Activated B cell treated with CpG ODN at 0.5 μM for 24 hours (primary cell): ENCODE measurements at regions of chr14 and their contacts with region 1.

Region 1: DNA sequence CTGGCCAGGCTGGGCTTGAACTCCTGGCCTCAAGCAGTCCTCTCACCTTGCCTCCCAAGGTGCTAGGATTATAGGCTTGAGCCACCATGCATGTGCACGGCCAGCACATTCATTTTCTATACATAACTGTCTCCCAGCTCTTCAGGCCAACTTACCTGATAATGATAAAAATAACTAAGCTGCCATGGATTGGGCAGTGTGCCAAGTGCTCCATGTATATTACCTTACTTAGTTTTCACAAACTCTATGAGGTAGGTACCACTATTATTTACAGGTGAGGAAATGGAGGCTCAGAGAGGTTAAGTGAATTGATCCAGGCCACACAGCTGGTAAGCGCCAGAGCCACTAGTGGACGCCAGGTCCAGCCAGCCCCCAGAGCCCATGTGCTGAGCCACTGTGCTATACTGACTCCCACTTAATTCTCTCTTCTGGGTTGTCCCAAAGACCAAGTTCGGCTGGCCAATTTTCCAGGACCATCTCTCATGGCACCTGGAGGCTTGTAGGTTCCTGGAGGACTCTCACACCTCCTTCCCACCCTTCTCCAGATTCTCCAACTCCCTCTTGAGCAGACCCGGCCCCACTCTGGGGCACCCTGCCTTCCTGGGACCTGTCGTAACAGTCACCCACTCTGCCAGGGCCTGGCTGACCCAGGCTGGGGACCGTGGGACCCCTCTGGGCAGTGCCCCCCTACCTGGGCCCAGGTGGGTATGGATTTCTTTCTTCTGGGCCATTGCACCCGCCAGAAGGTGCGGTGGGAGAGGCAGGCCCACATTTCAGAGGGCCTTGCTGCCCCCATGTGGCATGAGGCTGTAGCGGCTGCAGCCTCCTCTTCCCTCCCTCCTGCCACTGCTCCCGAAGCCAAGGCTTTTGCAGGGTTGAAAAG is 30.2 kb upstream of the CIPC start:
- DNase-seq: peak; percentile 48
- ATAC-seq: peak; percentile 66
- H3K4me3 Mint-ChIP-seq: no peak overlapping the region
- H3K27ac Mint-ChIP-seq: no peak overlapping the region
- H3K4me1 Mint-ChIP-seq: peaks cover 28% of the 10 kb centered on the region
- H3K27me3 Mint-ChIP-seq: peaks cover 3% of the 10 kb centered on the region
- CTCF ChIP-seq: no peak

Region 2: GRCh38 chr14:76876076-76876475 is 191.8 kb before region 1 on chr14:
- CTCF ChIA-PET with region 1: interaction called, 233 read pairs
- POLR2A ChIA-PET with region 1: interaction called, 8 read pairs
- intact Hi-C with region 1: loop called (anchors 1 kb)
- DNase-seq: no peak
- ATAC-seq: peak; percentile 54
- H3K4me3 Mint-ChIP-seq: no peak overlapping the region
- H3K27ac Mint-ChIP-seq: no peak overlapping the region
- H3K4me1 Mint-ChIP-seq: no peaks in the 10 kb centered on the region
- H3K27me3 Mint-ChIP-seq: no peaks in the 10 kb centered on the region
- CTCF ChIP-seq: no peak

Region 3: DNA sequence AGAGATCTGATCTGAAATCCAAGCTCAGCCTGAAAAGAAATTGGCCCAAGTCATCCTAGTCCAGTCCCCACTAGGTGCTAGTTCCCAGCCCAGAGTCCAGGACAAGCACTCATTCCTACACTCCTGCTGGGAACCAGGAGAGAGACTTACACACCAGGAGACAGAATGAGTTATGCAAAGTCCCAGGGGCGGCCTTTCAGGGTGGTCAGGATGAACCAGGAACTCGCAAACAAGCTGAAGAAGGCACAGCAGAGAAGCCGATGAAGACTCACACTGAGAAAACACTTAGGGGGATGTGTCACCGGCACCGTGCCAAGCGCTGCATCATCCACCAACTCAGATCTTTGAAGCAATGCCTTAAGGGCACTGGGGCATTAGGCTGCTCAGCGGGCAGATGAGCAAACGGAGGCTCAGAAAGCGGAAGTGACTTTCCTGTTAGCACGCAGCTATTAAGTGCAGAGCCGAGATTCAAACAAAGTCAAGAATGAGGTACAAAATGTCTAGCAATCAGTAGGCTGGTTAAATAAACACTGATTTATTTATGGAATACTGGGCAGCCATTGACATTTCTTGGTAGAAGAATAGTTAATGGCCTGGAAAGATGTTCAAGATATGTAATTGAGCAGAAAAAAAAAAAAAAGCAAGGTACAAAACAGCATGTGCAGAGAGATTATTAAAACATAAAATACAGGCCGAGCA is 163.0 kb before region 1 on chr14:
- CTCF ChIA-PET with region 1: interaction called, 13 read pairs
- POLR2A ChIA-PET with region 1: interaction called, 9 read pairs
- intact Hi-C with region 1: no loop called
- DNase-seq: peak; percentile 73
- ATAC-seq: peak; percentile 92
- H3K4me3 Mint-ChIP-seq: peak overlapping the region; percentile 63
- H3K27ac Mint-ChIP-seq: peak overlapping the region; percentile 93
- H3K4me1 Mint-ChIP-seq: peaks cover 39% of the 10 kb centered on the region
- H3K27me3 Mint-ChIP-seq: no peaks in the 10 kb centered on the region
- CTCF ChIP-seq: no peak

Region 4: DNA sequence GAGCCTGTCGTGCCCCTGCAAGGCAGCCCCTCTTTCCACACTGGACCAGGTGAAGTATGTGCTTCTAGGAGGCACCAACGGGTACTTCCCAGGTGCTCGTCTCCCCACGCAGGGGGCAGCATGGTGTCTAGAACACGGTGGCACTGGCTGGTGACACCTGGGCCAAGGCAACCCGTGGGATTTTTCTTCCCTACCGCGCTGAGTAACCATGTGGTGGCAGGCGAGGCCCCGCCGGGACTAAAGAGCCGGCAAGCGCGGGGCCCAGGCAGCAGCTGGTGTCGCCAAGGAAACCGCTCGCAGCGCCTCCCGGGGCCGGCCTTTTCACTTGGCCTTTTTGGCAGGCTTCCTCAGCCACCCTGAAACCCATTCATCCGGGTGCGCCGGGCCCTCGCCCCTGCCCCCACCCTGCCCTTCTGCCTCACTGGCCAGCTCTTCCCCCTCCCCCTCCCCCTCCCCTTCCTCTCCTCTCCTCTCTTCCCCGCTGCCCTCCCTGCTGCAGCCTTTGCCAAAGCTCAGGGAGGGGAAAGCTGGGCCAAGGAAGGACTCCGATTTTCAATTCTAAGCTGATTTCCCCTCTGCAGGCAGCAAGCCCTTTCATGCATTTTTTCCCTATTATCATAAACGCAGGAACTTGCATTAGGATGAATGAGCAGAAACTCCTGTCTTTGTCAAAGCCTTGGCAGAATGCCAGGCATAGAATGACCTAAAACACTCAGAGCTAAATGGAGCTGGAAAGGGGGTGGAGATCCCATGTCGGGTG is 120.6 kb before region 1 on chr14:
- CTCF ChIA-PET with region 1: interaction called, 8 read pairs
- POLR2A ChIA-PET with region 1: no interaction called
- intact Hi-C with region 1: loop called (anchors 1 kb)
- DNase-seq: peak; percentile 69
- ATAC-seq: peak; percentile 93
- H3K4me3 Mint-ChIP-seq: peak overlapping the region; percentile 19
- H3K27ac Mint-ChIP-seq: no peak overlapping the region
- H3K4me1 Mint-ChIP-seq: peaks cover 19% of the 10 kb centered on the region
- H3K27me3 Mint-ChIP-seq: no peaks in the 10 kb centered on the region
- CTCF ChIP-seq: no peak

Region 5: DNA sequence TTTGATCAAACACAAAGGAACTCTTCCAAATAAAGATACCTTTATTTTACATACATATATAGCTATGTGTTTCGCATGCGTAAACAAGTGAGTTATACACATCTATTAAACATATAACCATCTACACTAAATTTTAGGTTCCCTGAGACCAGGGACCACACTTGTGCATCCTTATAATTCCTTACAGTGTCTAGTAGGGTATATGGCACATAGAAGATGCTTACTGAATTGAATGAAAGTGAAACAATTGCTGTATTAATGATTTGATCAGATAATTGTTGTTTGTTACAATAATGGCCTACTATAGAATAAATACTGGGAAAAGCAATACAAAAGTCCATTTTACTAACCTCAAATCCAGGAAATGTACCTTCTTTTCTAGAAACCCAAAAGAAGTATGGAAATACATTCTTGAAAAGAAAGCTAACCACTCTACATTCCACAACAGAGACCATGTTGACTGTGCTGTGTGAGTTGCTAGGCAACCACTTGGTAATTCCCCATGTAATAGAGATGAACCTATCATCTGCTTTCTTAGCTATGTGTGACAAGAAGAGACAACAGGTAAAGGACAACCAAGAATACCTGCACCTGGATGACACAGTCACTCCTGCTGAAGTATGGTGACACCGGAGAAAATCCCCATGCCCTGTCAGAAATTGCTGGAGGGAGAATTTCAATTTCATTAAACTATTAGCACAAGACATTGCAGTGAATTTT is 18.3 kb after region 1 on chr14:
- CTCF ChIA-PET with region 1: interaction called, 11 read pairs
- POLR2A ChIA-PET with region 1: no interaction called
- intact Hi-C with region 1: no loop called
- DNase-seq: no peak
- ATAC-seq: peak; percentile 81
- H3K4me3 Mint-ChIP-seq: no peak overlapping the region
- H3K27ac Mint-ChIP-seq: peak overlapping the region; percentile 26
- H3K4me1 Mint-ChIP-seq: peaks cover 22% of the 10 kb centered on the region
- H3K27me3 Mint-ChIP-seq: no peaks in the 10 kb centered on the region
- CTCF ChIP-seq: no peak